ENCODE measurements at regions of chr15 and their contacts with region 1.

Region 1: GRCh38 chr15:55993111-55993803 is at the start of gene NEDD4:
- DNase-seq: peak; percentile 48 to 60 (median 49)
- H3K4me3 ChIP-seq: peak within 1 kb of the TSS; percentile 88 to 95 (median 92)
- H3K4me3 Mint-ChIP-seq: peak within 1 kb of the TSS; percentile 94 to 98
- H3K27ac ChIP-seq: no peak within 1 kb of the TSS
- H3K27ac Mint-ChIP-seq: peak within 1 kb of the TSS in 3 of 7 donors; percentile 16 to 86 (median 70)
- H3K4me1 ChIP-seq: peaks cover 13% of the 10 kb centered on the region in 2 donors
- H3K4me1 Mint-ChIP-seq: peaks cover 30% of the 10 kb centered on the region
- H3K27me3 ChIP-seq: peaks cover 0 to 4% of the 10 kb centered on the region in 2 donors
- H3K27me3 Mint-ChIP-seq: peaks cover 0 to 10% (median 0%) of the 10 kb centered on the region in 3 donors
- CTCF ChIP-seq: peak; percentile 44
- polyA plus RNA-seq, gene NEDD4: 1.2 to 3.8 (median 1.3) TPM

Region 2: GRCh38 chr15:56052395-56053045 is 59.3 kb after region 1 on chr15:
- intact Hi-C with region 1: loop called in 1 of 2 experiments (anchors 10 kb)
- DNase-seq: peak in 1 of 3 donors; percentile 16
- H3K4me3 ChIP-seq: no peak overlapping the region
- H3K4me3 Mint-ChIP-seq: no peak overlapping the region
- H3K27ac ChIP-seq: no peak overlapping the region
- H3K27ac Mint-ChIP-seq: no peak overlapping the region
- H3K4me1 ChIP-seq: no peaks in the 10 kb centered on the region
- H3K4me1 Mint-ChIP-seq: no peaks in the 10 kb centered on the region
- H3K27me3 ChIP-seq: no peaks in the 10 kb centered on the region
- H3K27me3 Mint-ChIP-seq: peaks cover 0 to 2% (median 0%) of the 10 kb centered on the region in 3 donors
- CTCF ChIP-seq: peak; percentile 83

Measured in CD14-positive monocyte (primary cell).